Spleen (tissue), 13 donors: ENCODE measurements at regions of chr5 and their contacts with region 1.

Region 1: DNA sequence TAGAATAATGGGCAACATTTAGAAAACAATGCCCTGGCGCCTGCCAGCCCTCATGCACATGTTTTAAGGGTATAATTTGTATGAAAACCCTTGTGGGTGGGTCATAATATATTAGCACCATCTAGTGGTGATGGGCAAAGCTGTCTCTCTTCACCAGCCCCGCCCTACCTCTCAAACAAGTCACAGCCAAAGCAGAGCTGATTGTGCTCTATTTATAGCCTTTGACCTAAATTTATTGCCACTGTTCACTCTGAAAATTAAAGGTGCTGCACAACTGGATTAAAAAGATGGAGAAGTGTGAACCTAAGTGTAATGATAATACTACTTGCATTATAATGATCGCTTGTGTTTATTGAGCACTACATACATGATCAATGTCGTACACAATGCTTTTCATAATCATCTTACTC is 131.9 kb upstream of the ANKH start:
- DNase-seq: no peak
- H3K4me3 ChIP-seq: no peak overlapping the region
- H3K27ac ChIP-seq: no peak overlapping the region
- H3K4me1 ChIP-seq: peaks cover 0 to 20% (median 3%) of the 10 kb centered on the region in 6 donors
- H3K27me3 ChIP-seq: peaks cover 0 to 6% (median 0%) of the 10 kb centered on the region in 7 donors
- CTCF ChIP-seq: peak; percentile 71 to 92 (median 80)
- POLR2A ChIP-seq: no peak

Region 2: GRCh38 chr5:14720236-14720971 is 283.1 kb before region 1 on chr5:
- intact Hi-C with region 1: loop called (anchors 5 kb)
- DNase-seq: no peak
- H3K4me3 ChIP-seq: no peak overlapping the region
- H3K27ac ChIP-seq: no peak overlapping the region
- H3K4me1 ChIP-seq: peaks cover 0 to 6% (median 0%) of the 10 kb centered on the region in 6 donors
- H3K27me3 ChIP-seq: no peaks in the 10 kb centered on the region
- CTCF ChIP-seq: no peak
- POLR2A ChIP-seq: no peak

Region 3: GRCh38 chr5:14753912-14754311 is 249.6 kb before region 1 on chr5:
- intact Hi-C with region 1: no loop called
- DNase-seq: no peak
- H3K4me3 ChIP-seq: no peak overlapping the region
- H3K27ac ChIP-seq: no peak overlapping the region
- H3K4me1 ChIP-seq: no peaks in the 10 kb centered on the region
- H3K27me3 ChIP-seq: no peaks in the 10 kb centered on the region
- CTCF ChIP-seq: no peak
- POLR2A ChIP-seq: no peak

Region 4: GRCh38 chr5:14879937-14880589 is 123.5 kb before region 1 on chr5:
- intact Hi-C with region 1: loop called (anchors 10 kb)
- DNase-seq: no peak
- H3K4me3 ChIP-seq: no peak overlapping the region
- H3K27ac ChIP-seq: no peak overlapping the region
- H3K4me1 ChIP-seq: no peaks in the 10 kb centered on the region
- H3K27me3 ChIP-seq: peaks cover 0 to 16% (median 0%) of the 10 kb centered on the region in 7 donors
- CTCF ChIP-seq: no peak
- POLR2A ChIP-seq: no peak

Region 5: DNA sequence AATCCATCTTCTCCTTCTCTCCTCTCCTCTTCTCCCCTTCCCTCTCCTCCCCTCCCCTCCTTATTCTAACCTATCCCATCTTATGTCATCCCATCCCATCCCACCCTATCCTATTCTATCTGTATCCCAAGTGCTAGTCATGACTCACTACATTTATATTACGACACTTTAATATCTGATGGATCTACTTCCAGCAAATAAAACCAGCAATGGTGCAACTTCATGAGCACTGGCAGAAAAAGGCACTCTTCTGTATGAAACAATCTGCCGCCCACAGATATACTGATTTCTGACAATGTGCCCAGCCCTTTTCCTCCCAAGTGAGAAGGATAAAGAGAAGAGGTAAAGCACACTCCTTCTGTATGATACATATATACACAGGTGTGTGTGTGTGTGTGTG is 45.3 kb before region 1 on chr5:
- intact Hi-C with region 1: loop called (anchors 10 kb)
- DNase-seq: no peak
- H3K4me3 ChIP-seq: no peak overlapping the region
- H3K27ac ChIP-seq: no peak overlapping the region
- H3K4me1 ChIP-seq: no peaks in the 10 kb centered on the region
- H3K27me3 ChIP-seq: no peaks in the 10 kb centered on the region
- CTCF ChIP-seq: no peak
- POLR2A ChIP-seq: no peak